ENCODE measurements at regions of chr2 and their contacts with region 1.

Region 1: GRCh38 chr2:38581193-38582147 is 21.3 kb downstream of the HNRNPLL start:
- DNase-seq: no peak
- ATAC-seq: peak; percentile 86
- H3K4me3 Mint-ChIP-seq: no peak overlapping the region
- H3K27ac Mint-ChIP-seq: peak overlapping the region; percentile 9
- H3K4me1 Mint-ChIP-seq: peaks cover 31% of the 10 kb centered on the region
- H3K27me3 Mint-ChIP-seq: no peaks in the 10 kb centered on the region

Region 2: GRCh38 chr2:38554973-38555595 is 26.4 kb before region 1 on chr2:
- CTCF ChIA-PET with region 1: interaction called, 11 read pairs
- DNase-seq: no peak
- ATAC-seq: peak; percentile 42
- H3K4me3 Mint-ChIP-seq: no peak overlapping the region
- H3K27ac Mint-ChIP-seq: no peak overlapping the region
- H3K4me1 Mint-ChIP-seq: peaks cover 3% of the 10 kb centered on the region
- H3K27me3 Mint-ChIP-seq: no peaks in the 10 kb centered on the region

Region 3: GRCh38 chr2:38665854-38666555 is 84.5 kb after region 1 on chr2 and contains the start of gene GALM:
- CTCF ChIA-PET with region 1: interaction called, 13 read pairs
- DNase-seq: peak; percentile 80
- ATAC-seq: peak; percentile 41
- H3K4me3 Mint-ChIP-seq: peak within 1 kb of the TSS; percentile 74
- H3K27ac Mint-ChIP-seq: peak within 1 kb of the TSS; percentile 96
- H3K4me1 Mint-ChIP-seq: peaks cover 64% of the 10 kb centered on the region
- H3K27me3 Mint-ChIP-seq: no peaks in the 10 kb centered on the region
- total RNA-seq, gene GALM: 67.1 to 86.0 TPM

Region 4: DNA sequence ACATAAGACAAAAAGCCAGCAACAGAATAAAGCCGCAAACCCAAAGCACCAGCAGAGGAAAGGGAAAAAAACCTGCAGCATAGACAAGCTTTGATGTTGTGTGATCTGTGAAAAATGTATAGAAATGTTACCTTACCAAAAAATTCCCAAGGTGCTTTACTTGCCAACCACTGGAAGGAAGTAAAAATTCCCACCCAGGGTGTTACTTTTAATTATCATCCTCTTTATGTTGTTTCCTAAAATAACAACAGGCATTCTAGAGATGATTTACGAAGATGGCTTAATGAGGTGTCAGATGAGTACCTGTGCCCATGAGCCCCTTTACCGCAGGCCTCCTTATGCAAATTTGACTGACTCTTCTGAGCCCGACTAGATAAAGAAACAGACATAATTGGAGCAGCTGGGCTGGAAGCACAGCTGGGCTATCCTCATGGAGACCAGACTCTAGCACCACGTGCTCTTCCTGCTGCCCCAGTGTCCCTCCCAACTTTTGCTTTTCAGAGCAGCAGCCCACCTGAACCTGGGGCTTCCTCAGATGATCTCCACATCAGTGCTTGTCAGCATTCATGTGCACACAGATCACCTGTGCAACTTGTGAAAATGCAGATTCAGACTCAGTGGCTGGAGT is 128.2 kb after region 1 on chr2:
- CTCF ChIA-PET with region 1: interaction called, 17 read pairs
- DNase-seq: no peak
- ATAC-seq: peak; percentile 60
- H3K4me3 Mint-ChIP-seq: no peak overlapping the region
- H3K27ac Mint-ChIP-seq: peak overlapping the region; percentile 85
- H3K4me1 Mint-ChIP-seq: peaks cover 59% of the 10 kb centered on the region
- H3K27me3 Mint-ChIP-seq: no peaks in the 10 kb centered on the region

Region 5: DNA sequence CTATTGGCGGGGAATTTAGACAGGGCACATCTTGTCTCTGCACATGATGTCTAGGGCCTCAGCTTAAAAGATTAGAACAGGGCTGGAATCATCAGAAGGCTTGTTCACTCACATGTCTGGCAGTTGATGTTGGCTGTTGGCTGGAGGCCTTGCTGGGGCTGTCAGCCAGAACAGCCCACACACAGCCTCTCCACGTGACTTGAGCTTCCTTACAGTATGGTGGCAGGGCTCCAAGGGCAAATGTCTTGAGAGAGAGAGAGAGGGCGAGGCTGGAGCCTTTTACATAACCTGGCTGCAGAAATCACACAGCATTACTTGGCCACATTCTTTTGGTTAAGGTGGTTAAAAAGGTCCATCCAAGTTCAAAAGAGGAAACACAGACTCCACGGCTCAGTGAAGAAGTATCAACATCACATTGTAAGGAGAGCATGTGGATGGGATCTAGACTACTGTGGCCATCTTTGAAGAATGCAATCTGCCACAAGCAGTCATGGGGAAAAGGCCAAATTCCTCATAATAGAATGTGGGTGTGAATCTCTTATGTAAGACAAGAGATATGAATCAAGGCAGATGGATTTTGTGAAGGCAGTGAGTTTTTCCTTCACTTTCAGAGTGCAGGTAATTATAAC is 139.3 kb after region 1 on chr2:
- CTCF ChIA-PET with region 1: interaction called, 147 read pairs
- DNase-seq: no peak
- ATAC-seq: peak; percentile 10
- H3K4me3 Mint-ChIP-seq: no peak overlapping the region
- H3K27ac Mint-ChIP-seq: peak overlapping the region; percentile 63
- H3K4me1 Mint-ChIP-seq: peaks cover 51% of the 10 kb centered on the region
- H3K27me3 Mint-ChIP-seq: no peaks in the 10 kb centered on the region

Region 6: GRCh38 chr2:38740851-38741731 is 159.6 kb after region 1 on chr2:
- CTCF ChIA-PET with region 1: interaction called, 47 read pairs
- DNase-seq: no peak
- ATAC-seq: peak; percentile 13
- H3K4me3 Mint-ChIP-seq: no peak overlapping the region
- H3K27ac Mint-ChIP-seq: peak overlapping the region; percentile 72
- H3K4me1 Mint-ChIP-seq: peaks cover 54% of the 10 kb centered on the region
- H3K27me3 Mint-ChIP-seq: no peaks in the 10 kb centered on the region